Colonic mucosa (tissue), 4 donors: ENCODE measurements at regions of chr12 and their contacts with region 1.

Region 1: DNA sequence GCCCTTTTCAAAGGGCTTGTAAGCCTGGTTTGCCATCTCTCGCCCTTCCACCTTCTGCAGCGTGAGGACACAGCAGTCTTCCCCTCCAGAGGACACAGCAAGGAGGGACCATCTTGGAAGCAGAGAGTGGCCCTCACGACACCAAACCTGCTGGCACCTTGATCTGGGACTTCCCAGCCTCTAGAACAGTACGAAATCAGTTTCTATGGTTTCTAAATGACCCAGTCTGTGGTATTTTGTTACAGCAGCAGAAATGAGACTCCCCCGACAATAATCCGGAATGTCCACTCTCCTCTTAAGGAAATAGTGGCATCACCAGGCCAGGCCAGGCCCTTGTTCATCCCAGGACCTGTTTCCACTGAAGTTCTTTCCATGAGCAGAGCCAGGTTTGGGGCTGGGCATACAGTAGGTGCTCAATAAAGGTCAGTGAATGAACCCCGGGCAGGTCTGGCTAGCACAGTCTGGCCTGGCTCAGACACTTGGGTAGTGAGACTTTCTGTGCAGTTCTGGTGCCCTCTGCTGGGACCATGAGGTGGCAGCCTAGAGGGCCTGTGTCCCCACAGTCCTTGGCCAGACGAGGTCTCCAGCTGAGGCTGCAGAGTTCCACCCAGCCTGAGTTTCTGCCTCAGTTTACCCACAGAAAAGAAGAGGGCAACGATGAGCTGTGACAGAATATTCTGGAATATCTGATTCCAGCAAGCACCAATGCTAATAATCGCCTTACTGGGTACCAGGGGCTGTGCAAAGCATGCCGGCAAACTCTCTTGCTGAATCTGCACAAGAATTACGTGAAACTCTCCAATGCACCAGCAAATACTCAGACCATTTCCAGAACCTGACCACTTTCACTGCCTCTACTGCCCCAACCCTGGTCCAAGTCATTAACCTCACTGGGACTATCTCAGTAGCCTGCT is 14.0 kb downstream of the ABCB9 start:
- DNase-seq: peak; percentile 86
- H3K4me3 ChIP-seq: no peak overlapping the region
- H3K27ac ChIP-seq: peak overlapping the region; percentile 66
- H3K4me1 ChIP-seq: peaks cover 7% of the 10 kb centered on the region
- H3K27me3 ChIP-seq: no peaks in the 10 kb centered on the region
- CTCF ChIP-seq: peak; percentile 92

Region 2: DNA sequence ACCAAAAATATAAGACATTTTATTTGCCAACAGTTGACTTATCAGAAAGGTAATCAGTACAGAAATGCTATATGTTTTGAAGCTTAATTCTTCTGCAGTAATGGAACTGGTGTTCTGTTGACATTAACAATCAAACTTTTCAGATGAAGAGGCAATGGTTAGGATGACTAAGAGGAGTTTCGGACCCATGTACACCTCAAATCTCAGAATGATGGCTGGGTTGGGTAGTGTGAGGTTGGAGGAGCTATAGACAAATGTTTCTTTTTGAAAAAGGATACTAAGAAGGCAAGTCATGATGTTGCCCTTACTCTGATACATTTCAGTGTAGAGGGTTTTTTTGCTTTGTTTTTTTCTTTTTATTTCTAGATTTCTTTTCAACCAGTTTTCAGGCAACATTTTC is 358.3 kb before region 1 on chr12:
- intact Hi-C with region 1: no loop called
- DNase-seq: no peak
- H3K4me3 ChIP-seq: no peak overlapping the region
- H3K27ac ChIP-seq: no peak overlapping the region
- H3K4me1 ChIP-seq: no peaks in the 10 kb centered on the region
- H3K27me3 ChIP-seq: no peaks in the 10 kb centered on the region
- CTCF ChIP-seq: no peak

Region 3: GRCh38 chr12:122793685-122794106 is 158.5 kb before region 1 on chr12:
- intact Hi-C with region 1: loop called (anchors 2 kb)
- DNase-seq: peak; percentile 19
- H3K4me3 ChIP-seq: no peak overlapping the region
- H3K27ac ChIP-seq: no peak overlapping the region
- H3K4me1 ChIP-seq: no peaks in the 10 kb centered on the region
- H3K27me3 ChIP-seq: no peaks in the 10 kb centered on the region
- CTCF ChIP-seq: peak; percentile 68

Region 4: GRCh38 chr12:122860346-122861090 is 91.7 kb before region 1 on chr12:
- intact Hi-C with region 1: loop called (anchors 2 kb)
- DNase-seq: peak; percentile 89
- H3K4me3 ChIP-seq: no peak overlapping the region
- H3K27ac ChIP-seq: no peak overlapping the region
- H3K4me1 ChIP-seq: peaks cover 10% of the 10 kb centered on the region
- H3K27me3 ChIP-seq: no peaks in the 10 kb centered on the region
- CTCF ChIP-seq: peak; percentile 84

Region 5: DNA sequence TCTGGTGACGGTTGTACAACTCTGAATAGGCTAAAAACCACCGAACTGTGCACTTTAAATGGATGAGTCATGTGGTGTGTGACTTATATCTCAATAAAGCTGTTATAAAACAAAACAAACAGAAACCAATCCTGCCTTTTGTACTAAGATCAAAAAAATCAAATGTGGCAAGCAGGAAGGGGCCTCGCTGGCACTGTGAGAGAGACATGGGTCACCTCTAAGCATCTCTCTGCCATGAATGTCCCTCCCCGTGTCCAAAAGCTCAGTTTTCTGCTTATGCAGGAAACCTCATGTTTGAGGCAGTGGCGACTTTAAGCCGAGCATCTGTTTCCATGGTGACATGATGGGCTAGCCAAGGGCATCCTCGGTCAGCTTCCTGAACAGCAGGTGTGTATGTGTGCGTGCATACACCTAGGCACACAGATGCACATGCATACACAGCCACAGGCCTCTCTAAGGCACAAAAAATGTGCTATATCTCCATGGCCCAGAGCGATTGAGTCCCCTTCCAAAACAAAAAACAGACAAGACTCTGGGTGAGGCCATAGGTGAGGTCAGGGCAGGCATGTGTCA is 72.7 kb after region 1 on chr12:
- intact Hi-C with region 1: no loop called
- DNase-seq: no peak
- H3K4me3 ChIP-seq: no peak overlapping the region
- H3K27ac ChIP-seq: no peak overlapping the region
- H3K4me1 ChIP-seq: no peaks in the 10 kb centered on the region
- H3K27me3 ChIP-seq: no peaks in the 10 kb centered on the region
- CTCF ChIP-seq: no peak

Region 6: DNA sequence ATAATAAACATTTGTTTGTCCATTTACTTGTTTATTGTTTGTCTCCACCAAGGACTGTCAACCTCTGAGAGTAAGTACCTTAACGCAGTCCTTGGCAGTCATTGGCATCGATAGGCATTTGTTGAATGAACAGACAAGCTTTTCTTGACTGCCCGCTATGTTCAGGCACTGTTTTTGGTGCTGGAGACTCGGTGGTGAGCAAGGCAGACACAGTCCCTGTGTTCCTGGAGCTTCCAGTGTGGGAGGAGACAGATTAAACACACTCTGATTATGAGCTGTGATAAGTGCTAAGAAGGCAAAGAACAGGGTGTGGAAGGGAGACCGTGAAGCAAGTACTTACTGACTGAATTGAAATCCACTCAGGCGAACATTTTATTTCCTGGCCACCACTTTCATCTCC is 761.2 kb after region 1 on chr12:
- intact Hi-C with region 1: no loop called
- DNase-seq: peak; percentile 66
- H3K4me3 ChIP-seq: peak overlapping the region; percentile 98
- H3K27ac ChIP-seq: peak overlapping the region; percentile 58
- H3K4me1 ChIP-seq: peaks cover 15% of the 10 kb centered on the region
- H3K27me3 ChIP-seq: no peaks in the 10 kb centered on the region
- CTCF ChIP-seq: no peak